Motor neuron (in vitro differentiated cells): ENCODE measurements at regions of chr11 and their contacts with region 1.

Region 1: GRCh38 chr11:6022956-6023355 is 7.6 kb downstream of the OR56A1 start:
- ATAC-seq: peak in 5 of 8 experiments; percentile 38 to 75 (median 58)
- H3K4me3 ChIP-seq: no peak overlapping the region
- H3K27ac ChIP-seq: no peak overlapping the region
- H3K4me1 ChIP-seq: no peaks in the 10 kb centered on the region

Region 2: GRCh38 chr11:6315811-6316425 is 293.0 kb after region 1 on chr11:
- in situ Hi-C with region 1: loop called in 2 of 9 experiments (anchors 25 kb)
- ATAC-seq: peak; percentile 4 to 94 (median 84)
- H3K4me3 ChIP-seq: no peak overlapping the region
- H3K27ac ChIP-seq: no peak overlapping the region
- H3K4me1 ChIP-seq: peaks cover 0 to 7% of the 10 kb centered on the region in 2 donors

Region 3: GRCh38 chr11:6333112-6333511 is 310.2 kb after region 1 on chr11:
- in situ Hi-C with region 1: loop called in 2 of 9 experiments (anchors 25 kb)
- ATAC-seq: peak in 2 of 8 experiments; percentile 27 to 59
- H3K4me3 ChIP-seq: no peak overlapping the region
- H3K27ac ChIP-seq: no peak overlapping the region
- H3K4me1 ChIP-seq: no peaks in the 10 kb centered on the region

Region 4: GRCh38 chr11:6362873-6363678 is 340.1 kb after region 1 on chr11:
- in situ Hi-C with region 1: loop called in 2 of 9 experiments (anchors 25 kb)
- ATAC-seq: peak; percentile 84 to 100 (median 95)
- H3K4me3 ChIP-seq: no peak overlapping the region
- H3K27ac ChIP-seq: no peak overlapping the region
- H3K4me1 ChIP-seq: no peaks in the 10 kb centered on the region

Region 5: GRCh38 chr11:6596239-6596877 is 573.4 kb after region 1 on chr11:
- in situ Hi-C with region 1: no loop called
- ATAC-seq: peak in 5 of 8 experiments; percentile 70 to 85 (median 79)
- H3K4me3 ChIP-seq: no peak overlapping the region
- H3K27ac ChIP-seq: peak overlapping the region; percentile 9 to 52
- H3K4me1 ChIP-seq: peaks cover 12 to 19% of the 10 kb centered on the region in 2 donors